ENCODE measurements at regions of chr3 and their contacts with region 1.

Region 1: DNA sequence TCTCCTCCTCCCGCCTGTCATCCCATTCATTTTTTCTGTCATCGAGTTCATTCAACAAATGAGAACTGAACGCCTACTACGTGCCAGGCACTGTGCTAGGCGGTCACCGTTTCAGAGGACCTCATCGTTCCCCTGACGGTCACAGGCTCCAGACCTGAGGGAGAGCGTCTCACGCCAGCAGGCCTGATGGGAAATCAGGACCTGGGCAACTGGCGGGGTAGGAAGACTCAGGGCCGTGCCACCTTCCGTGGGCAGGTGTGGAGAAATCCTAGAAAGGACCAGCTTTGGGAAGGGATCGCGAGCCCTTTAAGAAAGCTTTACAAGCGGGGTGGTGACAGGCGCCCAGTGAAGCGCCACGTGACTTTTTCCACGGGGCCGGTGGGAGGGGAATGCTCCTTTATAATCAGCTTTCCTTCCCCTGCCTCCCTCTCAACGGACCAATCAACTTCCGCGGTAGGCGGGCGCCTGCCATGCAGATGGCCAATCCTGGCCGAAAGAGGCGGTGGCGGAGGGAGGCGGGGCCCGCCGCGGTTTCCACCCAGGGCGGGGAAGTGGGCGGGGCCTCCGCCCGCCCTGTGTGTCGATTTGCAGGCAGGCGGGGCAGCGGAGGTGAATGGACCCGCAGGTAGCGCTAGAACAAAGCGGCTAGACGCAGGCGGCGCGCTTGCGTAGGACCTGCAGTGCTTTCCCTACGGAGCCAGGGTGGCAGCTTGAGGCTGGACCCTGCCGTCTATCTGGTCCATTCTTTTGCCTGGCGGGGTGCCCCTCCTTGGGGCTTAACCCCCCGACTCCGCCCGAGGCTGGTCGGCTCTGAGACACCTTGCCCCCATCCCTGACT is 816 bp upstream of the DUSP7 start:
- DNase-seq: peak; percentile 100
- ATAC-seq: peak; percentile 93

Region 2: DNA sequence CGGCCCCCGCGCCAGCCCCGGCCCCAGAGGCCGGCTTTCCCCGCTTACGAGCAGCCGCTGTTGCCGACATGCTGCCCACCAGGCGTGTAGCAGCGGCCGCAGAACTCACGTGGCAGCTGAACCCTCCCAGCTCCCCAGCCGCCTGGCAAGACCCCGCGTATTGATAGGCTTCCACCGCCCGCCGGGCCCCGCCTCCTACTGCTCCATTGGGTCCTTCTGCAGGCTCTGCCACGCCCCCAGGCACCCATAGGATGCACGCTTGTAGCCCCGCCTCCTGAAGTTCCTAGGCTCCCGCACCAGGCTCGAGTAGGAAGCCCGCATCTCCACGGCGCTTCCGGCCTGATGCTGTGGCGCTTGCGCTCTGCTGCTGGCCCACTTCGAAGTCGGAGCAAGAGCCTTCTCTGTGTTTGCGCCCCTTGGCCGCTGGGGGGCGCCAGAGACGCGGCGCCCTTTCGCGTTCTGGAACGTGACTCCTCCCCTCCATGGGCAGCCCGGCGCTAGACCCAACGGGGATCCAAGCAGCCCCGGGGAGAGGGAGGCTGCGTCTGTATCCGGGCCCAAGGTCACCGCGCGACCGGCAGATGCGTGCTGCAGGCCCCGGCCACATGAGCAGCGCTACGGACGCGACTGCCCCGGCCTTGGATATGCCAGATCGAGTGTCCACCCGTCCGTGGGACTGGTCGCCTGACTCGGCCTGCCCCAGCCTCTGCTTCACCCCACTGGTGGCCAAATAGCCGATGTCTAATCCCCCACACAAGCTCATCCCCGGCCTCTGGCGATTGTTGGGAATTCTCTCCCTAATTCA is 115.2 kb before region 1 on chr3 and contains the starts of genes PARP3 and RRP9:
- intact Hi-C with region 1: loop called (anchors 5 kb)
- DNase-seq: peak; percentile 100
- ATAC-seq: peak; percentile 96
- total RNA-seq, gene PARP3: 17.6 TPM
- total RNA-seq, gene RRP9: 7.7 TPM

Region 3: DNA sequence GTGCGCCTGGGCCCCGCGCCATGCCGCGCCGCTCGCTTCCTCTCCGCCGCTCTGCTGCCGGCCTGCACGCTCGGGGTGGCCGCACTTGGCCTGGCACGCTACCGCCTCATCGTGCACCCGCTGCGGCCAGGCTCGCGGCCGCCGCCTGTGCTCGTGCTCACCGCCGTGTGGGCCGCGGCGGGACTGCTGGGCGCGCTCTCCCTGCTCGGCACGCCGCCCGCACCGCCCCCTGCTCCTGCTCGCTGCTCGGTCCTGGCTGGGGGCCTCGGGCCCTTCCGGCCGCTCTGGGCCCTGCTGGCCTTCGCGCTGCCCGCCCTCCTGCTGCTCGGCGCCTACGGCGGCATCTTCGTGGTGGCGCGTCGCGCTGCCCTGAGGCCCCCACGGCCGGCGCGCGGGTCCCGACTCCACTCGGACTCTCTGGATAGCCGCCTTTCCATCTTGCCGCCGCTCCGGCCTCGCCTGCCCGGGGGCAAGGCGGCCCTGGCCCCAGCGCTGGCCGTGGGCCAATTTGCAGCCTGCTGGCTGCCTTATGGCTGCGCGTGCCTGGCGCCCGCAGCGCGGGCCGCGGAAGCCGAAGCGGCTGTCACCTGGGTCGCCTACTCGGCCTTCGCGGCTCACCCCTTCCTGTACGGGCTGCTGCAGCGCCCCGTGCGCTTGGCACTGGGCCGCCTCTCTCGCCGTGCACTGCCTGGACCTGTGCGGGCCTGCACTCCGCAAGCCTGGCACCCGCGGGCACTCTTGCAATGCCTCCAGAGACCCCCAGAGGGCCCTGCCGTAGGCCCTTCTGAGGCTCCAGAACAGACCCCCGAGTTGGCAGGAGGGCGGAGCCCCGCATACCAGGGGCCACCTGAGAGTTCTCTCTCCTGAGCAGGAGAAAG is 101.1 kb before region 1 on chr3:
- intact Hi-C with region 1: no loop called
- DNase-seq: peak; percentile 78
- ATAC-seq: peak; percentile 79

Region 4: DNA sequence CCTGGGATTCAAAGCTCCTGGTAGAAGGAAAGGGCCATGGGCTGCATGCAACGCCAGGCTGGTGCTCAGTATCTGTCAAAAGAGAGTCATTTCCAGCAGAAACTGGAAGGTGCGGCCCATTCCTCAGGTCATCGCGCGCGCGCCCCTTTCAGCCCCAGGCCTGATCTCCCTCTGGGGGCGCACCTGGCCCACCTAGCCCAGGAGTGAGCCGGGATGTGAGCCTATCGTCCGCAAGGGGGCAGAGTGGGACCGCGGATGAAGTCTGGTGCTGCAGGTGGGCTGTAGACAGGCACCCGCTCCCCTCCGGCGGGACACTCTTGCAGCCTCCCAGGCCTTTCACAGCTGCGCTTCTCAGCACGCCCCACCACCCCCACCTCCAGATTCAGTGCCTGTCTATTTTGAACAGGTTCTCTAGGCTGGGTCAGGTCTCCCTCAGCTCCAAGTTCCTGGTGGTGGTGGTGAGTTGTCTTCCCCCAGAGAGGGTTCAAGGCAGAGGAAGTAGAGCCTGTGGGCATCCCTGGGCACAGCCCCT is 55.7 kb before region 1 on chr3:
- intact Hi-C with region 1: loop called (anchors 1 kb)
- DNase-seq: peak; percentile 90
- ATAC-seq: peak; percentile 66

Region 5: DNA sequence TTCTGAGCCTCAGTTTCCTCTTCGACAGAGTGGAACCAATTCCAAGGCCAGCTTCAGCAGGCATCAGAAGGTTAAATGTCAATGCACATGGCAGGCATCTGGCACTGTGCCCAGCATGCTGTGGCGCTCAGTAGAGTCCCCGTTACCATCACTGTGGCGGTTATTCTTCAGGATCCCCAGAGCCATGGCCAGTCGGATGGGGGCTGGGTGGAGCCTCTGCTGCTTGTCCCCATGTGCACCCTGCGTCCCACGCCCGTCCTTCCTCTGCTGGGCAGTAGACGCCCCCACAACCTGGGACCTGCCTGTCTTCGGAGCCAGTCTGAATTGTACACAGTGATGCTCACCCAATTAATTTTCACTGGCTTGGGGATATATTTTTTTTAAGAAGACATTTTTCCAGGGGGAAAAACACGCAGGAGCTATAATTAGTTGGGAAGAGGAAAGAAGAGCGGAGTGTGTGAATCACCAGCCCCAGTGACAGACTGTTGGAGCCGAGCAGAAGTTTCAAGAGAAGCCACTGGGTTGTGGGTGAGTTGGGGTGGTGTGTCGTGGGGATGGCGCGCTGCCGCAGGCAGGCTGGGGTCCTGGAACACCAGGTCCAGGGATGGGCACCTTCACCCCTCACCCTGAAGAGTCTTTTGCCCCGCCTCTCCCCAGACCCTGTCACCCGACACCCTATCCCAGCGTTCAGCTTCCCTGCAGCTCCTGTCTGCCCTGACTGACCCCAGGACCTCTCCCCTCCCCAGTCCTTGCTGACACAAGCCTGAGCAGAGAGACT is 34.7 kb before region 1 on chr3:
- intact Hi-C with region 1: loop called (anchors 2 kb)
- DNase-seq: no peak
- ATAC-seq: peak; percentile 25

Region 6: GRCh38 chr3:52108302-52109232 is 51.4 kb after region 1 on chr3:
- intact Hi-C with region 1: loop called (anchors 2 kb)
- DNase-seq: no peak
- ATAC-seq: peak; percentile 69

Region 7: DNA sequence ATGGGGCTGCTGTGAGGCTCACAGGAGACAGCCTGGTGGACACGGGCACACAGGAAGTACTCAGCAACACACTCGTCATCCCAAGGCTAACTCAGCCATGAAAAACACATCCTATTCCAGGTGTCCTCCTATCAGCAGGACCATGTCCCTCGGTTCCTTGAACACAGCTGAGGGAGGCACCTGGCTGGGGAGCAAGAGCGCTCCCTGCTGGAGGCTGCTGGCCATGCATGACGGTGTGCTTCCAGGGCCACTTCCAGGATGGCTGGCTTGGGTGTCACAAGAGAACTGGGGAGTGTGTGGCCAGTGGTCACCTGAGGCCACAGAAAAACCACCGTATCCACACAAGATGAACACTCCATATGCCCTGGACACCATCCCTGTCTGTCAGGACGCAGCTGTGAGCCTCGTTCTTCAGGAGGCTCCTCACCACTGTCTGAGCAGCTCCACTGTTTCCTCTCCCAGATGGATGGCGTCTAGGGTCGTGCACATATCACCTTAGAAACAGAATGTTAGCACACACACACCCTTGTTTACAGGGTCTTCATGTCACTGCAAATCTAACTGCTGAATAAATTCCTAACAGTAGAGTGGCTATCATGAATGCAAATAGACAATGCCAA is 66.0 kb after region 1 on chr3:
- intact Hi-C with region 1: loop called (anchors 2 kb)
- DNase-seq: peak; percentile 87
- ATAC-seq: peak; percentile 83

Region 8: DNA sequence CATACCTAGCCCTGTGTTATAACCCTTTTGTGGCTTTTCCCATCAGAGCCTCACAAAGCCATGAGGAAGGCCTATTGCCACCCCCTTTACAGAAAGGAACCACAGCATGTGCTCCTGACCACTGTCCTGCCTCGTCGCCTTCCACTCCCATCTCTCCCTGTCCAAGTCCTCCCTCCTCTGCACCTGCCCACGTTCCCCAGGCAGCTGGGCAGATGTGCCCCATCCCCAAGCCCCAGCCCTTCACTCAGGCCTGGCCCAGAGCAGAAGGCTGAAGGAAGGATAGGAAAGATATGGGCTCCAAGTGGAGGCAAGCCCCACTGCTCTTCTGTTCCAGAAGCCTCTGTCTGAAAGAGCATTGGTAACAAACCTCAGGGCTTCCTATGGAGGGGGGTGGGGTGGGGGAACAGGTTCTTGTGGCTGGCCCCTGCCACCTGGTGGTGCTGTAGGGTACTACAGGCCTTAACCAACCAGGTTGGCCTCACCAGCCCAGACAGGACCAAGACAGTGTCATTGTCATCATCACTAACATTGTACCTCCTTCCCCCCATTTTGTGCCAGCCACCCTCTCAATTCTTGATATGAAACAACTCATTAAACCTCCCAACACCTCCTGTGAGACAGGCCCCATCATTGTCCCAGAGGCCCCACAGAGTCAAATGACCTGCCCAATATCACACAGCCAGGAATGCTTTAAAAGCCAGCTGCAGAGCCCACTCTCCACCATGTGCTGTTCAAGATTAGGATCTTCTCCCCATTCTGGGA is 87.0 kb after region 1 on chr3:
- intact Hi-C with region 1: loop called (anchors 2 kb)
- DNase-seq: peak; percentile 88
- ATAC-seq: peak; percentile 83

Measured in Right ventricle myocardium inferior (tissue), 1 donor.